Common myeloid progenitor, CD34-positive (primary cell): ENCODE measurements at regions of chr5 and their contacts with region 1.

Region 1: GRCh38 chr5:34991486-34992238 is 56.1 kb downstream of the AGXT2 start:
- DNase-seq: no peak
- H3K4me3 ChIP-seq: no peak overlapping the region
- H3K27ac ChIP-seq: no peak overlapping the region
- H3K4me1 ChIP-seq: no peaks in the 10 kb centered on the region
- H3K27me3 ChIP-seq: peaks cover 0 to 8% (median 3%) of the 10 kb centered on the region in 5 experiments

Region 2: DNA sequence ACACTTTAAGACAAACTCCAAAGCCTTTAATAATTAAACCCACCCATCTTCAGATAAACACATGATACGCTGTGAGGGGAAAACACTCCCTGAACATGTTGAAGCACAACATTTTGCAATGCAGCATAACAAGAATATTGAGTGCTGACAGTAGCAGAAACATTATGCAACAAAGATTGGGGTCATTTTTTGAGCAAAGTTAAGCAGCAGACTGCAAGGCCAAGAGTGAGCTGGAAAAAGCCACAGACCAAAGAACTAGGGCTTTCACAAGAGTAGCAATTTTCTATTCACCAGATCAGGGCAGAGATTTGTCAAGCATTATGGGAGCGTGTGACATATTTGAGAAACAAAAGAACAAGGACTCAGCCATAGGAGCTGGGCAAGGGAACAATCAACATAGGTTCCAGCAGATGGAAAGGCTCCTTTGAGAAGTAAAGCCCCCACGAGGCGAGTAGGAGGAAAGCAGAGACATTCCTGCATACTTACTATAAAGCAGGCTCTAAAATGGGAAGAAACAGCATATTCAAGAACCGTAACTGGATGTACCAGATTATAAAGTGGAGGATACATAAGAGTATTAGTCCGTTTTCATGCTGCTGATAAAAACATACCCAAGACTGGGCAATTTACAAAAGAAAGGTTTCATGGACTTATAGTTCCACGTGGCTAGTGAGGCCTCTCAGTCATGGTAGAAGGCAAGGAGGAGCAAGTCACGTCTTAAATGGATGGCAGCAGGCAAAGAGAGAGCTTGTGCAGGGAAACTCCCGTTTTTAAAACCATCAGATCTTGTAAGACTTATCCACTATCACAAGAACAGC is 157.5 kb before region 1 on chr5:
- CTCF ChIA-PET with region 1: no interaction called
- POLR2A ChIA-PET with region 1: no interaction called
- DNase-seq: no peak
- H3K4me3 ChIP-seq: no peak overlapping the region
- H3K27ac ChIP-seq: no peak overlapping the region
- H3K4me1 ChIP-seq: peaks cover 0 to 12% (median 8%) of the 10 kb centered on the region in 4 experiments
- H3K27me3 ChIP-seq: no peaks in the 10 kb centered on the region

Region 3: DNA sequence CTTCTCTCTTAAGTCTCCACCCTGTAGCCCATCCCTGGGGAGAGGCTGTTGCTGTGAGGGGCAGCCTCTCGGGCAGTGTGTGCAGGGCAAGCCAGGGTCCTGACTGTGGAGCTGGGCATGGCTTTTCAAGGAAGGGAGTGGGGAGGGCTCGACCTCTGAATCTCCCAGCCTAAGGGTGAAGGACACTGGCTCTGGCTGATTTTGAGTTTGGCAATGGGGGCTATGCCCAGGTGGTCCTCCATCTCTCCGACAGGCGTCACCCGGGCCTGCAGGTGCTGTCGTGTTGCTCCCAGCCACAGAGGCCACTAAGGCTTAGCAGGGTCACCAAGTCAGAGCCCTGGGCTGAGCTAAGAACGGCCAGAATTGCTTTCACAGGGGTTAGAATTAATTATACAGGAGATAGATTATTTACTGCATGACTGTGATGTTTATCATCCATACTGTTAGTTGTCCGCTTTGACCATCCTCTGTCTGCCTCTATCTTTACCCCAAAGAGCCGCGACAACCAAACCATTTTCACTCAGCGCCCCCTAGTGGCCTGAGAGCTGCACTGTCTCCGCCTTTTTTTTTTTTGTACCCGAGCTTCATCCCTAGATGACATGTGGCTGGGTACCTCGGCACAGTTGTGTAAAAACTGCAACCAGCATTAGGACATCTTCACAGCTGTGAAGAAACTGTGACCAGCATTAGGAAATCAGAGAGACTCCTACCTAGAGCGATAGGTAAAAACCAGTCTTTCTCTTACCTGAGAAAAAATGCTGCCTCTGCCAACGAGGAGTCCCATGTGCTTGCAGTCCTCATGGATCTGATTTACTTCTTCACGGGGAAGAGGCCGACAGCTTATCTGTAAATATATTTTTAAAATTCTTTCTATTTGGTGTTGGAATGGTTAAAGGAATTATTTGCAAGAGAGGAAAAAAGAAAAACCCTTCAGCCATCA is 11.6 kb after region 1 on chr5:
- CTCF ChIA-PET with region 1: interaction called, 11 read pairs
- POLR2A ChIA-PET with region 1: no interaction called
- DNase-seq: peak; percentile 30 to 56 (median 50)
- H3K4me3 ChIP-seq: no peak overlapping the region
- H3K27ac ChIP-seq: no peak overlapping the region
- H3K4me1 ChIP-seq: no peaks in the 10 kb centered on the region
- H3K27me3 ChIP-seq: peaks cover 0 to 9% (median 0%) of the 10 kb centered on the region in 5 experiments

Region 4: DNA sequence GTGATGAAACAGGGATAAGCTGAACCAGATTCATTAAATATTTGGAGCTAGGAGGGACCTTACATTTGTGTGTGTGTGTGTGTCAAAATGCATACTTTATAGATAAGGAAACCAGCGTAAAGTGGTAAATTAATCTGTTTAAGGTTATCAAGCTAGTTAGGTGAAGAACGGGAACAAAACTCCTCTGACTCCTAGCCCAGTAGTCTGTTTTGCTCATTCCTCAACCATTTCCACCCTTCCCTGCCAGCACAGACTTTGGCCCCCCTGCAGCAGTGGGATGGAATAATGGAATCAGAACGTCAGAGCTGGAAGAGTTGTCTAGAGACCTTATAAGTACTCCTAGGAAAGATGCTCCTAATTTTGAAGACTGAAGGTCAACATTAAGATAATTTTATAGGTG is 49.6 kb after region 1 on chr5:
- CTCF ChIA-PET with region 1: no interaction called
- POLR2A ChIA-PET with region 1: no interaction called
- DNase-seq: no peak
- H3K4me3 ChIP-seq: no peak overlapping the region
- H3K27ac ChIP-seq: no peak overlapping the region
- H3K4me1 ChIP-seq: no peaks in the 10 kb centered on the region
- H3K27me3 ChIP-seq: peaks cover 2 to 8% (median 2%) of the 10 kb centered on the region in 5 experiments